SK-N-SH (cell line): ENCODE measurements at regions of chr15 and their contacts with region 1.

Region 1: GRCh38 chr15:90648137-90649070 is 68.7 kb upstream of the BLM start:
- DNase-seq: peak; percentile 86
- H3K4me3 ChIP-seq: no peak overlapping the region
- H3K27ac ChIP-seq: no peak overlapping the region
- H3K4me1 ChIP-seq: peaks cover 5 to 12% of the 10 kb centered on the region in 2 experiments
- H3K27me3 ChIP-seq: no peaks in the 10 kb centered on the region
- CTCF ChIP-seq: peak; percentile 96
- EP300 ChIP-seq: no peak
- RAD21 ChIP-seq: peak; percentile 93

Region 2: GRCh38 chr15:90571063-90571541 is 77.3 kb before region 1 on chr15:
- CTCF ChIA-PET with region 1: no interaction called
- POLR2A ChIA-PET with region 1: no interaction called
- DNase-seq: no peak
- H3K4me3 ChIP-seq: no peak overlapping the region
- H3K27ac ChIP-seq: peak overlapping the region in 1 of 2 experiments; percentile 8; a peak in 1 of 4 replicates
- H3K4me1 ChIP-seq: peaks cover 0 to 6% of the 10 kb centered on the region in 2 experiments; a peak in 1 of 4 replicates
- H3K27me3 ChIP-seq: no peaks in the 10 kb centered on the region
- CTCF ChIP-seq: no peak
- EP300 ChIP-seq: no peak
- RAD21 ChIP-seq: no peak

Region 3: GRCh38 chr15:90638201-90638691 is 10.2 kb before region 1 on chr15:
- CTCF ChIA-PET with region 1: interaction called, 17 read pairs
- POLR2A ChIA-PET with region 1: no interaction called
- DNase-seq: peak; percentile 54
- H3K4me3 ChIP-seq: no peak overlapping the region
- H3K27ac ChIP-seq: peak overlapping the region in 1 of 2 experiments; percentile 91; a peak in 2 of 4 replicates
- H3K4me1 ChIP-seq: peaks cover 0 to 12% of the 10 kb centered on the region in 2 experiments; a peak in 3 of 4 replicates
- H3K27me3 ChIP-seq: no peaks in the 10 kb centered on the region
- CTCF ChIP-seq: no peak
- EP300 ChIP-seq: no peak
- RAD21 ChIP-seq: no peak

Region 4: DNA sequence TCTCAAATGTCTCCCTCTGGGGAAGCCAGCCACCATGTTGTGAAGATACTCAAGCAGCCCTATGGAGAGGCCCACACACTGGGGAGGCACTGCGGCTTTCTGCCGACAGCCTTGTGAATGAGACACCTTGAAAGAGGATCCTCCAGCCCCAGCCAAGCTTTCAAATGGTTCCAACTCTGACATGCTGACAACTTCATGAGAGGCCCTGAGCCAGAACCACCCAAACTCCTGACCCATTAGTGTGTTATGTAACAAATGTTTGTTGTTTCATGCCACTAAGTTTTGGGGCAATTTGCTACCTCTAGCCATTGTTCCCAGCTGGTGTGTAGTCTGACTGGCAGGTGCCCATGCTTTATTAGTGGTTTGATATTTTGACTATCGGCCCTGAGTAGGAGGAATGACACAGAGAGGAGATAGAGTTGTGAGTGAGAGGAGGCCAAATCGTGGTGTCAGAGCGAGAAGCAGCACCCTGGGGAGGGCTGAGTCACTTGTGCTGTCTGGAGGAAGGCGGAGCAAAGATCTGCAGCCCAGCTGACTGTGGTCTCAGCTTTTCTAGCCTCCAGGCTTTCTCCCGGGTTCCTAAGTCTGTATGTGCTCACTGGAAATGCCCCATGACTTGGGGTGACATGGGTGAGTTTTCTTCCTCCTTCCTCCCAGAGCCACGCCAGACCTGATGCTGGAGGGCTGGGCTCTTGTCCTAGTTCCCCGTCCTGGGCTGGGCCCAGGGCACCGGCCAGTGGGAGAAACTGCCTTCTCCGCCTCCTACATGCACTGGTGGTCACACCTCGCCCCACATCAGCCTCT is 12.0 kb after region 1 on chr15:
- CTCF ChIA-PET with region 1: interaction called, 14 read pairs
- POLR2A ChIA-PET with region 1: interaction called, 3 read pairs
- DNase-seq: no peak
- H3K4me3 ChIP-seq: no peak overlapping the region
- H3K27ac ChIP-seq: peak overlapping the region in 1 of 2 experiments; percentile 45; a peak in 1 of 4 replicates
- H3K4me1 ChIP-seq: peaks cover 7 to 9% of the 10 kb centered on the region in 2 experiments; a peak in 2 of 4 replicates
- H3K27me3 ChIP-seq: no peaks in the 10 kb centered on the region
- CTCF ChIP-seq: no peak
- EP300 ChIP-seq: no peak
- RAD21 ChIP-seq: no peak

Region 5: GRCh38 chr15:90686435-90687218 is 38.2 kb after region 1 on chr15:
- CTCF ChIA-PET with region 1: interaction called, 10 read pairs
- POLR2A ChIA-PET with region 1: no interaction called
- DNase-seq: no peak
- H3K4me3 ChIP-seq: no peak overlapping the region
- H3K27ac ChIP-seq: no peak overlapping the region
- H3K4me1 ChIP-seq: 0 out of 4 replicates have a peak, but pooled peaks cover 0 to under 1% of the 10 kb centered on the region in 2 experiments
- H3K27me3 ChIP-seq: no peaks in the 10 kb centered on the region
- CTCF ChIP-seq: no peak
- EP300 ChIP-seq: no peak
- RAD21 ChIP-seq: no peak

Region 6: GRCh38 chr15:90762109-90762508 is 113.7 kb after region 1 on chr15:
- CTCF ChIA-PET with region 1: no interaction called
- POLR2A ChIA-PET with region 1: no interaction called
- DNase-seq: no peak
- H3K4me3 ChIP-seq: no peak overlapping the region
- H3K27ac ChIP-seq: no peak overlapping the region
- H3K4me1 ChIP-seq: peaks cover 0 to 5% of the 10 kb centered on the region in 2 experiments; a peak in 1 of 4 replicates
- H3K27me3 ChIP-seq: no peaks in the 10 kb centered on the region
- CTCF ChIP-seq: no peak
- EP300 ChIP-seq: no peak
- RAD21 ChIP-seq: no peak